ENCODE measurements at regions of chr15 and their contacts with region 1.

Region 1: GRCh38 chr15:90286678-90287077 is 21.2 kb downstream of the NGRN start:
- DNase-seq: peak; percentile 67
- ATAC-seq: peak; percentile 69
- H3K4me3 ChIP-seq: no peak overlapping the region
- H3K4me3 Mint-ChIP-seq: no peak overlapping the region
- H3K27ac ChIP-seq: no peak overlapping the region
- H3K27ac Mint-ChIP-seq: no peak overlapping the region
- H3K4me1 ChIP-seq: no peaks in the 10 kb centered on the region
- H3K4me1 Mint-ChIP-seq: peaks cover 4% of the 10 kb centered on the region
- H3K27me3 ChIP-seq: no peaks in the 10 kb centered on the region
- H3K27me3 Mint-ChIP-seq: no peaks in the 10 kb centered on the region
- CTCF ChIP-seq: peak; percentile 78

Region 2: GRCh38 chr15:90101969-90102890 is 184.4 kb before region 1 on chr15 and contains the start of gene IDH2:
- CTCF ChIA-PET with region 1: interaction called, 3 read pairs
- POLR2A ChIA-PET with region 1: no interaction called
- intact Hi-C with region 1: loop called (anchors 1 kb)
- DNase-seq: peak; percentile 84
- ATAC-seq: peak; percentile 88
- H3K4me3 ChIP-seq: peak within 1 kb of the TSS; percentile 39 to 76 (median 73)
- H3K4me3 Mint-ChIP-seq: peak within 1 kb of the TSS; percentile 90
- H3K27ac ChIP-seq: peak within 1 kb of the TSS; percentile 53 to 81
- H3K27ac Mint-ChIP-seq: peak within 1 kb of the TSS; percentile 97
- H3K4me1 ChIP-seq: peaks cover 43 to 47% of the 10 kb centered on the region in 2 donors
- H3K4me1 Mint-ChIP-seq: peaks cover 45% of the 10 kb centered on the region
- H3K27me3 ChIP-seq: peaks cover 0 to 5% (median 1%) of the 10 kb centered on the region in 4 experiments
- H3K27me3 Mint-ChIP-seq: peaks cover 6% of the 10 kb centered on the region
- CTCF ChIP-seq: no peak
- total RNA-seq, gene IDH2: 30.7 and 33.3 TPM in 2 replicates

Region 3: DNA sequence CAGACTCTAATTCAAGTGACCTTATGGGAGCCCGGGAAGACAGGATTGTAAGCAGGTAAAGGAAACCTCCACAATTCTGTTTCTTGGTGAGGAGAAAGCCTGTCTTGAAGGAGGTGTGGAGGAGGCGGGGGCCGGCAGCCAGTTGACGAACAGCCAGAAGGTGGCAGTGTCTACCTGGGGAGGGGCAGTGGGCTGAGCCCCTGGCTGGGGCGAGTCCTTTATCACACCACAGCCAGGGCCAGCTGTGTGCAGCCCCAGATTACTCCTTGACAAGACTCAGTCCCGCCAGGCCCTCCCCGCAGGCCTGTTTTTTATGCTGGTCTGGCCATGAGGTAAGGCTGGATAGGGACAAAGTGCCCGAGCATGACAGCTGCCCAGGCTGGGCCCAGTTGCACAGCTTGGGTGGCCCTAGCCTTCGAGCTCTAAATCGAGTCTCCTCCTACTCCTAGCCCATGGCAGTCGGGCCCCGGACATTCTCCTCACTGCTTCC is 143.5 kb before region 1 on chr15:
- CTCF ChIA-PET with region 1: interaction called, 28 read pairs
- POLR2A ChIA-PET with region 1: interaction called, 5 read pairs
- intact Hi-C with region 1: loop called (anchors 1 kb)
- DNase-seq: peak; percentile 74
- ATAC-seq: peak; percentile 95
- H3K4me3 ChIP-seq: no peak overlapping the region
- H3K4me3 Mint-ChIP-seq: no peak overlapping the region
- H3K27ac ChIP-seq: no peak overlapping the region
- H3K27ac Mint-ChIP-seq: no peak overlapping the region
- H3K4me1 ChIP-seq: peaks cover 0 to 6% of the 10 kb centered on the region in 2 donors
- H3K4me1 Mint-ChIP-seq: peaks cover 3% of the 10 kb centered on the region
- H3K27me3 ChIP-seq: no peaks in the 10 kb centered on the region
- H3K27me3 Mint-ChIP-seq: peaks cover 8% of the 10 kb centered on the region
- CTCF ChIP-seq: peak; percentile 84

Region 4: DNA sequence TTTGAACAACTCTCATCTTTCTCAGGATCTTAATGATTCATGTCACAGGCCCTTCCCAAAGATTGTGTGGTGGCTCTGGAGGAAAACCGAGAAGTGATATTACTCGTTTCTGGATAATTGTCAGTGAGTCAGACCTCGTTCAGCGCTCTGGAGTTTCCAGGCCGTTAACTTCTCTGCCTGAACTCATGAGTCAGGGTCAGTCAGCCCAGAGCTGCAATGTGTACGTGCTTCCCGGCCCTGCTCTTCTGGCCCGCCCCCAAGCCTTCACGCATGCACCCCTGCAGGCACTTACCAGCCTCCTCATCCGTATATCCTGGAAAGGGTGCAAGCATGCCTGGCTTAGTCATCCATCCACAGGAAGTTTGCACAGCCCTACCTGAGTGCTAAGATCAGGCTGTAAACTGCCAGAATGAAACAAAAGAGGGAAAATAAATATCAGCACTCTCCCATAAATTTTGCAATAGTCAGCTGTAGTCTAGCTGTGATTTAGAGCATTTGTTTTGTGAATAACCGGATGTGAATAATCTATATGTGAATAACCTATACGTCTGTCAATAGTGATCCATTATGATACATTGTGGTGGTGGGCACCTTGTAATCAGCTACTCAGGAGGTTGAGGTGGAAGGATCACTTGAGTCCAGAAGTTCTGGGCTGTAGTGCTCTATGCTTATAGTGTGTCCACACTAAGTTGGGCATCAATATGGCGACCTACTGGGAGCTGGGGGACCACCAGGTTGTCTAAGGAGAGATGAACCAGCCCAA is 120.8 kb before region 1 on chr15:
- CTCF ChIA-PET with region 1: interaction called, 29 read pairs
- POLR2A ChIA-PET with region 1: interaction called, 9 read pairs
- intact Hi-C with region 1: no loop called
- DNase-seq: no peak
- ATAC-seq: peak; percentile 53
- H3K4me3 ChIP-seq: no peak overlapping the region
- H3K4me3 Mint-ChIP-seq: peak overlapping the region; percentile 30
- H3K27ac ChIP-seq: no peak overlapping the region
- H3K27ac Mint-ChIP-seq: peak overlapping the region; percentile 59
- H3K4me1 ChIP-seq: peaks cover 22 to 40% of the 10 kb centered on the region in 2 donors
- H3K4me1 Mint-ChIP-seq: peaks cover 56% of the 10 kb centered on the region
- H3K27me3 ChIP-seq: no peaks in the 10 kb centered on the region
- H3K27me3 Mint-ChIP-seq: no peaks in the 10 kb centered on the region
- CTCF ChIP-seq: no peak

Region 5: GRCh38 chr15:90300988-90301706 is 14.5 kb after region 1 on chr15:
- CTCF ChIA-PET with region 1: interaction called, 20 read pairs
- POLR2A ChIA-PET with region 1: no interaction called
- intact Hi-C with region 1: no loop called
- DNase-seq: peak; percentile 73
- ATAC-seq: peak; percentile 36
- H3K4me3 ChIP-seq: no peak overlapping the region
- H3K4me3 Mint-ChIP-seq: no peak overlapping the region
- H3K27ac ChIP-seq: no peak overlapping the region
- H3K27ac Mint-ChIP-seq: no peak overlapping the region
- H3K4me1 ChIP-seq: peaks cover 3 to 5% of the 10 kb centered on the region in 2 donors
- H3K4me1 Mint-ChIP-seq: peaks cover 5% of the 10 kb centered on the region
- H3K27me3 ChIP-seq: no peaks in the 10 kb centered on the region
- H3K27me3 Mint-ChIP-seq: no peaks in the 10 kb centered on the region
- CTCF ChIP-seq: peak; percentile 80